ENCODE measurements at regions of chr16 and their contacts with region 1.

Region 1: GRCh38 chr16:57658878-57659674 is 9.0 kb upstream of the ADGRG3 start:
- DNase-seq: no peak
- H3K4me3 ChIP-seq: no peak overlapping the region
- H3K4me3 Mint-ChIP-seq: no peak overlapping the region
- H3K27ac ChIP-seq: no peak overlapping the region
- H3K27ac Mint-ChIP-seq: no peak overlapping the region
- H3K4me1 ChIP-seq: no peaks in the 10 kb centered on the region
- H3K4me1 Mint-ChIP-seq: peaks cover 3% of the 10 kb centered on the region
- H3K27me3 ChIP-seq: no peaks in the 10 kb centered on the region
- H3K27me3 Mint-ChIP-seq: peaks cover 11 to 18% (median 11%) of the 10 kb centered on the region in 3 donors
- CTCF ChIP-seq: no peak

Region 2: DNA sequence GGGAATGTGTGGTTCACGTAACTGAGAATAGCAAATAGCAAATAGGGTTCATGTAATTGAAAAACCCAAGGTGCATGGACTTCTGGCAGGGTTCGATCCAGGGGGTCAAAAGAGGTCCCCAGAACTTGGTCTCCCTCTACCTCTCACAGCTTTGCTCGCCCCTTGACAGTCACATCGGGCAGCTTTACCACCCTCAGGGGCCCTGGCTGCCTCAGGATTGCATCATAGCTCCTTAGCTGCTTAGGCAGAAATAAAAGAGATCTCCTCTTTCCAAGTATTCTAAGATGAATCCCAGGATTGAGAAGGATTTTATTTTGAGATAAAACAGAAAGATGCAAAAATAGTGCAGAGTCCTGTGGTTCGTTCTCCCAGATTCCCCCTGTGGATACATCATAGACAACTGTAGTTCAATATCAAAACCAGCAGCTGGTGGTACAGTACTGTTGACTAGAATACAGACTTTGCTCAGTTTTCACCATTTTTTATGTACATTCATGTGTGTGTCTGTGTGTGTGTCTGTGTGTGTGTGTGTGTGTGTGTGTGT is 21.8 kb after region 1 on chr16:
- intact Hi-C with region 1: loop called in 1 of 2 experiments (anchors 2 kb)
- DNase-seq: no peak
- H3K4me3 ChIP-seq: no peak overlapping the region
- H3K4me3 Mint-ChIP-seq: no peak overlapping the region
- H3K27ac ChIP-seq: no peak overlapping the region
- H3K27ac Mint-ChIP-seq: peak overlapping the region in 3 of 7 donors; percentile 44 to 64 (median 57)
- H3K4me1 ChIP-seq: peaks cover 31 to 47% of the 10 kb centered on the region in 2 donors
- H3K4me1 Mint-ChIP-seq: peaks cover 39% of the 10 kb centered on the region
- H3K27me3 ChIP-seq: no peaks in the 10 kb centered on the region
- H3K27me3 Mint-ChIP-seq: peaks cover 0 to 4% (median 3%) of the 10 kb centered on the region in 3 donors
- CTCF ChIP-seq: no peak

Measured in CD14-positive monocyte (primary cell).